Endothelial cell of umbilical vein (primary cell): ENCODE measurements at regions of chr2 and their contacts with region 1.

Region 1: DNA sequence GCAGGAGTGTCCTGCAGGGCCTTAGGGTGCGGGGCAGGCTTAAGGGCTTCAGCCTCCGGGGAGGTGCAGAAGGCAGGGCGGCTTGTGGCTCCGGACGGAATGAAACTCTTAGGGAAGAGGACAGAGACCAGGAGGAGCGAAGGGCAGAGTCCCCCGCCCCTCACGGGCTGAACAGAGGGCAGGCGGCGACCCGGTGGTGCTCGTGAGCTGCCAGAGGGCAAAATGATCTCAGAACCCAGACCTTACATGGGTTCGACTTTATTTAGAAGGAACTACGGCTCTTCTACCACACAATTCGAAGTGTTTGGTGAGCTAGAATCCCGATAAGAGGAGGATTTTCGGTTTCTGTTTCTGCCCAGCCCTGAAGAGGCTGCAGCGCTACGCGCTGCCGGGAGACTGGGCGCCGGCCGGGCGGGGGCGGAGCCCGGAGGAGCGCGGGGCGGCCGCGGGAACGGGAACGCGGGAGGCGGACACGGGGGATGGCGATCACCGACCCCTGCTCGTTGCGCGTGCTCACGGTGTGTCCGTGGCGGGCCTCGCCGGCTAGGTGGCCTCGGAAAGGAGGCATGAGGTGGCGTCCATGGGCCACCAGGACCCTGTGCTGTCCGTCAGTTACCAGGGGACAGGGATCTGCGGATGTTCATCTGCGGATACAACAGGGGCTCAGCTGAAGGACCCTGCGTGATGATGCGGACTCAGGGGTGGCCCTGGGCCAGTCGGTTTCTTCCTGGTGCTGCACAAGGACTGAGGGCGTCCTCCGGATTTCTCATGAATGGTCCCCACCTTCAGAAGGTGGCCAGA is 4.2 kb upstream of the SP100 start:
- DNase-seq: peak; percentile 69
- H3K4me3 ChIP-seq: peak overlapping the region; percentile 17 to 77 (median 49)
- H3K27ac ChIP-seq: peak overlapping the region; percentile 72
- H3K4me1 ChIP-seq: peaks cover 52% of the 10 kb centered on the region
- H3K27me3 ChIP-seq: no peaks in the 10 kb centered on the region
- CTCF ChIP-seq: no peak
- POLR2A ChIP-seq: peak; percentile 71

Region 2: GRCh38 chr2:230007931-230008707 is 403.7 kb before region 1 on chr2:
- CTCF ChIA-PET with region 1: no interaction called
- POLR2A ChIA-PET with region 1: no interaction called
- dilution Hi-C with region 1: no loop called
- intact Hi-C with region 1: loop called (anchors 5 kb)
- DNase-seq: peak; percentile 78
- H3K4me3 ChIP-seq: peak overlapping the region in 1 of 3 experiments; percentile 20
- H3K27ac ChIP-seq: no peak overlapping the region
- H3K4me1 ChIP-seq: peaks cover 7% of the 10 kb centered on the region
- H3K27me3 ChIP-seq: no peaks in the 10 kb centered on the region
- CTCF ChIP-seq: peak; percentile 67 to 78
- POLR2A ChIP-seq: no peak

Region 3: GRCh38 chr2:230130668-230131364 is 281.0 kb before region 1 on chr2:
- CTCF ChIA-PET with region 1: no interaction called
- POLR2A ChIA-PET with region 1: no interaction called
- dilution Hi-C with region 1: no loop called
- intact Hi-C with region 1: loop called (anchors 2 kb)
- DNase-seq: peak; percentile 74
- H3K4me3 ChIP-seq: peak overlapping the region in 1 of 3 experiments; percentile 18
- H3K27ac ChIP-seq: peak overlapping the region; percentile 52
- H3K4me1 ChIP-seq: peaks cover 13% of the 10 kb centered on the region
- H3K27me3 ChIP-seq: no peaks in the 10 kb centered on the region
- CTCF ChIP-seq: no peak
- POLR2A ChIP-seq: no peak

Region 4: GRCh38 chr2:230326453-230327417 is 85.0 kb before region 1 on chr2 and contains the start of gene SP140L:
- CTCF ChIA-PET with region 1: no interaction called
- POLR2A ChIA-PET with region 1: no interaction called
- dilution Hi-C with region 1: no loop called
- intact Hi-C with region 1: loop called (anchors 1 kb)
- DNase-seq: peak; percentile 86
- H3K4me3 ChIP-seq: peak within 1 kb of the TSS; percentile 34 to 89 (median 61)
- H3K27ac ChIP-seq: peak within 1 kb of the TSS; percentile 66
- H3K4me1 ChIP-seq: peaks cover 17% of the 10 kb centered on the region
- H3K27me3 ChIP-seq: no peaks in the 10 kb centered on the region
- CTCF ChIP-seq: no peak
- POLR2A ChIP-seq: peak; percentile 21
- total RNA-seq, gene SP140L: 21.4 and 27.3 TPM in 2 replicates

Region 5: GRCh38 chr2:230614913-230615332 is 203.2 kb after region 1 on chr2:
- CTCF ChIA-PET with region 1: no interaction called
- POLR2A ChIA-PET with region 1: no interaction called
- dilution Hi-C with region 1: no loop called
- intact Hi-C with region 1: loop called (anchors 2 kb)
- DNase-seq: no peak
- H3K4me3 ChIP-seq: no peak overlapping the region
- H3K27ac ChIP-seq: no peak overlapping the region
- H3K4me1 ChIP-seq: peaks cover 2% of the 10 kb centered on the region
- H3K27me3 ChIP-seq: peaks cover 0 to 3% of the 10 kb centered on the region in 2 experiments
- CTCF ChIP-seq: no peak
- POLR2A ChIP-seq: no peak

Region 6: DNA sequence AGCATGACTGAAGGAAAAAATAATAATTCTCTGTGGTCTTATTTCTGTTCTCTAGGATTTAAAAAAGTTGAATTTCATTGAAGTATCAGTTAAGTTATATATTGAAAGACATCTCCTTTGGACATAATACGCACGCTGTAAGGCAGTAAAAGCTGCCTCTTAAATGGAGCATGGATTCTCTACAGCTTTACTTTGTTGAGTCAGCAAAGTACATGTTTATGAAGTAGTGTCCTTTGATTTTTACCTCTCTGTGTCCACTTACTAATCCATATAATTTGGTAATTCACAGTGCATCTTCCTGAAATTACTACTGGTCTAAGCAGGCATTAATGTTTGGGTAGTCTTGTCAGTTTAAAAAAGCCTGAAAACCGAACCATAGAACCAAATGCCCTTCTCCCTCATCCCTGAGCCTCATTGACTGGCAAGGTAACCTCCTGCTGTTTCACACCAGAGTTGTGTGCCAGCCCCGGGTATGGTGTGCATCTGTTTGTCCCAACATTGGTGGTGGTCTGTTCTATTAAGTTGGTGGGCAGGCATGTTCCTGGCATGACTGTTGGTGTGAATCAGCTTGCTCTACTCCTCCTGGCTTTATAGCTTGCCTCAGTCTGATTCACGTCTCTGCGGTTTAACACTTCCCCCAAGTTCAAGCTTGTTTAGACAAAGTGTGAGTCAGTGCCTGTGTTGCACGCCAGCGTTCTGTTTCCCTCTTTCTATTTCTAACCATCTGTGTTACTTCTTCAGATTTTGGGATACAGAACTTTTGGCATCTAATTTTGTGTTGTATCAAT is 382.0 kb after region 1 on chr2:
- CTCF ChIA-PET with region 1: no interaction called
- POLR2A ChIA-PET with region 1: no interaction called
- dilution Hi-C with region 1: no loop called
- intact Hi-C with region 1: loop called (anchors 5 kb)
- DNase-seq: peak; percentile 98
- H3K4me3 ChIP-seq: peak overlapping the region in 1 of 3 experiments; percentile 20
- H3K27ac ChIP-seq: peak overlapping the region; percentile 97
- H3K4me1 ChIP-seq: peaks cover 37% of the 10 kb centered on the region
- H3K27me3 ChIP-seq: no peaks in the 10 kb centered on the region
- CTCF ChIP-seq: no peak
- POLR2A ChIP-seq: peak; percentile 46